CD8-positive, alpha-beta T cell (primary cell): ENCODE measurements at regions of chr9 and their contacts with region 1.

Region 1: GRCh38 chr9:97921959-97922724 is at the start of gene TRMO:
- DNase-seq: peak; percentile 94 to 100 (median 99)
- ATAC-seq: peak; percentile 83
- H3K4me3 ChIP-seq: peak within 1 kb of the TSS; percentile 70 to 89
- H3K4me3 Mint-ChIP-seq: peak within 1 kb of the TSS; percentile 87
- H3K27ac ChIP-seq: peak within 1 kb of the TSS; percentile 97 to 100
- H3K27ac Mint-ChIP-seq: peak within 1 kb of the TSS; percentile 99
- H3K4me1 ChIP-seq: peaks cover 42% of the 10 kb centered on the region
- H3K4me1 Mint-ChIP-seq: peaks cover 52% of the 10 kb centered on the region
- H3K27me3 ChIP-seq: no peaks in the 10 kb centered on the region
- H3K27me3 Mint-ChIP-seq: no peaks in the 10 kb centered on the region
- CTCF ChIP-seq: peak; percentile 77
- total RNA-seq, gene TRMO: 45.7 to 50.6 TPM

Region 2: DNA sequence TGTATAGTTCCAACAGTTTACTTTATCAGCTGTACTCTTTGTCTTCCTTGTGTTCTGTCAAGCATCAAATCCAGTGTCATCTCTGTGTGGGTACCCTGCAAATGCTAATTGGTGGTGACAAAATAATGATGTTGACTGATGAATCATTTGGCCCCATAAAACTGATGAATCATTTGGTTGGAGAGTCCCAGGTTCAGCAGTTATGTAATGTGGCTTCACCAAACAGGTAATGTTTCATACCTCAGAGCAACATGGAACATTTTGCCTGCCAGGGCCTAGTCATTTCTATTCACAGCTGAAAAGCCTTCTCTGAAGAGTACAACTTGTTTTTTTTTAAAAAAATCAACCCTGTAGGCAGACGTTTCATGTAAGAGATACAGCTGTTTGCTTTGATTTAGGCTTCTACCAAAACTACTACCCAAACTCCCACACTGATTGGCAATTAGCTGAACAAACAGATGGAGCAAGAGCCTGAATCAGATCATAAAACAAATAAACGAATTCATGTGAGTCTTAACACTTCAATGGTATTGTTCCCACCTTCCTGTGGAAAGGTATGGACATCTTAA is 859.6 kb before region 1 on chr9:
- CTCF ChIA-PET with region 1: no interaction called
- POLR2A ChIA-PET with region 1: no interaction called
- intact Hi-C with region 1: no loop called
- DNase-seq: no peak
- ATAC-seq: no peak
- H3K4me3 ChIP-seq: no peak overlapping the region
- H3K4me3 Mint-ChIP-seq: no peak overlapping the region
- H3K27ac ChIP-seq: no peak overlapping the region
- H3K27ac Mint-ChIP-seq: no peak overlapping the region
- H3K4me1 ChIP-seq: no peaks in the 10 kb centered on the region
- H3K4me1 Mint-ChIP-seq: no peaks in the 10 kb centered on the region
- H3K27me3 ChIP-seq: no peaks in the 10 kb centered on the region
- H3K27me3 Mint-ChIP-seq: peaks cover 23% of the 10 kb centered on the region
- CTCF ChIP-seq: no peak

Region 3: GRCh38 chr9:97411789-97412625 is 510.1 kb before region 1 on chr9 and contains the start of gene TDRD7:
- CTCF ChIA-PET with region 1: no interaction called
- POLR2A ChIA-PET with region 1: no interaction called
- intact Hi-C with region 1: loop called in 1 of 2 experiments (anchors 5 kb)
- DNase-seq: peak; percentile 86 to 97 (median 92)
- ATAC-seq: peak; percentile 88
- H3K4me3 ChIP-seq: peak within 1 kb of the TSS; percentile 62 to 77
- H3K4me3 Mint-ChIP-seq: peak within 1 kb of the TSS; percentile 86
- H3K27ac ChIP-seq: peak within 1 kb of the TSS; percentile 56 to 79
- H3K27ac Mint-ChIP-seq: peak within 1 kb of the TSS; percentile 85
- H3K4me1 ChIP-seq: peaks cover 13% of the 10 kb centered on the region
- H3K4me1 Mint-ChIP-seq: peaks cover 27% of the 10 kb centered on the region
- H3K27me3 ChIP-seq: no peaks in the 10 kb centered on the region
- H3K27me3 Mint-ChIP-seq: peaks cover 14% of the 10 kb centered on the region
- CTCF ChIP-seq: peak; percentile 96
- total RNA-seq, gene TDRD7: 3.5 to 4.5 TPM

Region 4: GRCh38 chr9:97615439-97616072 is 306.6 kb before region 1 on chr9:
- CTCF ChIA-PET with region 1: no interaction called
- POLR2A ChIA-PET with region 1: no interaction called
- intact Hi-C with region 1: no loop called
- DNase-seq: peak in 8 of 9 experiments; percentile 22 to 74 (median 58)
- ATAC-seq: peak; percentile 67
- H3K4me3 ChIP-seq: no peak overlapping the region
- H3K4me3 Mint-ChIP-seq: no peak overlapping the region
- H3K27ac ChIP-seq: no peak overlapping the region
- H3K27ac Mint-ChIP-seq: no peak overlapping the region
- H3K4me1 ChIP-seq: no peaks in the 10 kb centered on the region
- H3K4me1 Mint-ChIP-seq: peaks cover 2% of the 10 kb centered on the region
- H3K27me3 ChIP-seq: no peaks in the 10 kb centered on the region
- H3K27me3 Mint-ChIP-seq: no peaks in the 10 kb centered on the region
- CTCF ChIP-seq: peak; percentile 97

Region 5: DNA sequence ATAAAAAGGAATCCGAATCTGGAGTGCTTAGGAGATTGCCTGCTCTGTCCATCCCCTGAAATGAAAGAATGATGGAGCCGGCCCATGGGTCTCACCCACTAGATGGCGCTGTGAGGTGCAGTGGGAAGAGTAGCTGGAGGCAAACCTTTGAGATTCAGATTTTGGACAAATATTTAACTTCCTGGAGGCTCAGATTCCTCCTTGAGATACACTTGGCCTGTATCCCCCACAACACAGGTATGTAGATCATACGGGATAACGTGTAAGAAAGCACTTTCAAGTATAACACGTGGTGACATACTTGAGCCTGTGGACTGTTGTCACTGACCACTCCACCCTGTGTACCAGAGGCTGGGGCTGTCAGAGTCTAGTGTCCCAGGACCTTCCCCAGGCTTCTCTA is 32.1 kb before region 1 on chr9:
- CTCF ChIA-PET with region 1: interaction called, 72 read pairs
- POLR2A ChIA-PET with region 1: interaction called, 14 read pairs
- intact Hi-C with region 1: loop called in 1 of 2 experiments (anchors 1 kb)
- DNase-seq: peak; percentile 44 to 77 (median 64)
- ATAC-seq: peak; percentile 77
- H3K4me3 ChIP-seq: no peak overlapping the region
- H3K4me3 Mint-ChIP-seq: no peak overlapping the region
- H3K27ac ChIP-seq: no peak overlapping the region
- H3K27ac Mint-ChIP-seq: peak overlapping the region; percentile 27
- H3K4me1 ChIP-seq: no peaks in the 10 kb centered on the region
- H3K4me1 Mint-ChIP-seq: peaks cover 8% of the 10 kb centered on the region
- H3K27me3 ChIP-seq: no peaks in the 10 kb centered on the region
- H3K27me3 Mint-ChIP-seq: no peaks in the 10 kb centered on the region
- CTCF ChIP-seq: peak; percentile 84

Region 6: GRCh38 chr9:97943308-97943855 is 21.2 kb after region 1 on chr9:
- CTCF ChIA-PET with region 1: interaction called, 32 read pairs
- POLR2A ChIA-PET with region 1: interaction called, 3 read pairs
- intact Hi-C with region 1: loop called in 1 of 2 experiments (anchors 1 kb)
- DNase-seq: no peak
- ATAC-seq: no peak
- H3K4me3 ChIP-seq: no peak overlapping the region
- H3K4me3 Mint-ChIP-seq: no peak overlapping the region
- H3K27ac ChIP-seq: no peak overlapping the region
- H3K27ac Mint-ChIP-seq: no peak overlapping the region
- H3K4me1 ChIP-seq: peaks cover 7% of the 10 kb centered on the region
- H3K4me1 Mint-ChIP-seq: peaks cover 8% of the 10 kb centered on the region
- H3K27me3 ChIP-seq: no peaks in the 10 kb centered on the region
- H3K27me3 Mint-ChIP-seq: no peaks in the 10 kb centered on the region
- CTCF ChIP-seq: no peak

Region 7: DNA sequence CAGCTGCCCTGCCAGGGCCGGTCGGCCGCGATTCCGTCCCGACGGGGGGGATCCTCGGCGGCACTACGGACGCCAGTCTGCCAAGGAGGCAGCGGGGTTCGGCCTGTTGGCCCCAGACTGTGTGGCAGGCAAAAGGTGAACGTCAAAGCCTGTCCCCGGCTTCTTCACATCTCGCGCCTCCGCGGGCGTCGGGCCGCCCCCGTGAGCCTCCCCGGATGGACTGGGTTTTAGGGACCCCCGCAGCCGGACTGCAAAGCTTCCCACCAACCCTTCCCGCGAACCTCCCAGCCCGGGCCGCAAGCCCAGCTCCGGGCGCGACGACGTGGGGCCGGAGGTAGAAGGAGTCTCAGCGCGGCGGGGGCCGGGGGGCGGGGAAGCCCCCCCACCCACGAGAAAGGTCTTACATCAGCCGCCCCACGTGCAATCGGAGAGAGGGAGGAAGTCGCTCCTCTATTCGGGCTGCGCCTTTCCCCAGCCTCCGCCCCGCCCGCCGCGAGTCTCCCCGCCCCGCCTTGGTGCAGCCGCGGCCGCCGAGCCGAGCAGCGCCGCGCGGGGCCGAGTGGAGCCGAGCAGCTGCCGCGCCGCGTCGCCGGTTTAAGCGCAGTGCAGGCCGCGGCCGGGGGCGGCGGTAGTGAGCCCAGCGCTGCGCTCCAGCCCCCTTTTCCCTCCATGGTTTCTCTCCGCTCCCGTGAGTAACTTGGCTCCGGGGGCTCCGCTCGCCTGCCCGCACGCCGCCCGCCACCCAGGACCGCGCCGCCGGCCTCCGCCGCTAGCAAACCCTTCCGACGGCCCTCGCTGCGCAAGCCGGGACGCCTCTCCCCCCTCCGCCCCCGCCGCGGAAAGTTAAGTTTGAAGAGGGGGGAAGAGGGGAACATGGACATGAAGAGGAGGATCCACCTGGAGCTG is 60.8 kb after region 1 on chr9 and contains the start of gene ANP32B:
- CTCF ChIA-PET with region 1: interaction called, 86 read pairs
- POLR2A ChIA-PET with region 1: interaction called, 121 read pairs
- intact Hi-C with region 1: loop called (anchors 1 kb)
- DNase-seq: peak; percentile 87 to 97 (median 94)
- ATAC-seq: peak; percentile 83
- H3K4me3 ChIP-seq: peak within 1 kb of the TSS; percentile 75 to 92
- H3K4me3 Mint-ChIP-seq: peak within 1 kb of the TSS; percentile 92
- H3K27ac ChIP-seq: peak within 1 kb of the TSS; percentile 75 to 85
- H3K27ac Mint-ChIP-seq: peak within 1 kb of the TSS; percentile 93
- H3K4me1 ChIP-seq: peaks cover 53% of the 10 kb centered on the region
- H3K4me1 Mint-ChIP-seq: peaks cover 64% of the 10 kb centered on the region
- H3K27me3 ChIP-seq: no peaks in the 10 kb centered on the region
- H3K27me3 Mint-ChIP-seq: no peaks in the 10 kb centered on the region
- CTCF ChIP-seq: peak; percentile 94
- total RNA-seq, gene ANP32B: 168 to 177 TPM

Region 8: DNA sequence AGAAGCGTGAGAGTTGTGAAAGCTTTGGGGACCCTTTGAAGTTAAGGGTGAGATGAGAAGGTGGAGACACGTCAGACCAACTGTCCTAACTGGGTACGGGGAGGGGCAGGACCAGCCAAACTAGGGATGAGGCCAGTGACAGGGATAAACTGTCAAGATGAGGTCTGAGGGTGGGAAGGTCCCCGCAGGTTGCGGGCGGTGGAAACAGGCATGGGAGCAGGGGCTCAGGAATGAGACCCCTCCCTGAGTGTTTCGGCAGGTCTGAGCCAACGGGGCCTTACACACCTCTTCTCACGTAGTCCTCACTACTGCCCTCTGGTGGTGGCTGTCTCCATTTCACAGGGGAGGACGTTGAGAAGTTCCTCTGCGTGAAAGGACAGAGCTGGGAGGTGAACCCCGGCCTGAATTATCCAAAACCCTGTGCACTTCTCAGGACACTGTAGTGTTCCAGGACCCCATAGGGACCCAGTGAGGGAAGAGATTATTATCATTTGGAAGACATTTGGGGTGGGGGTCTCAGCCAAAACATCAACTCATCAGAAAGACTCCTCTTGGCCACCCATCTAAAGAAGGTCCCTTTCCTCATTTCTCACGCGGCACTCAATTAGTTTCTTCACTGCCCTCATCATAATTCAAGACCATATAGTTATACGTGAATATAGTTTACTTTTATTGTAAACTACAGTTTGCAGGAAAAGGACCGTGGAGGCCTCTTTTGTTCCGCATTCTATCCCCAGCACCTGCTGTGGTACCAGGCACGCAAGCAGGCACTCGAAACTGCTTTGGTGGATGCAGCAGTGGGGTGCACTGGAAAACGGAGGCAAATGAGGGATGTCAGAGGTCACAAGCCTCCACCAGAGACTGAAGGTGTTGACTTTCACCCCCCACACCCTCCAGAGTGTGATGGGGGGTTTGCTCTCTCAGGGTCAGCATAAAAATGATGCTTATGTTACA is 112.7 kb after region 1 on chr9:
- CTCF ChIA-PET with region 1: interaction called, 110 read pairs
- POLR2A ChIA-PET with region 1: interaction called, 4 read pairs
- intact Hi-C with region 1: loop called (anchors 1 kb)
- DNase-seq: peak; percentile 77 to 97 (median 91)
- ATAC-seq: peak; percentile 99
- H3K4me3 ChIP-seq: no peak overlapping the region
- H3K4me3 Mint-ChIP-seq: no peak overlapping the region
- H3K27ac ChIP-seq: no peak overlapping the region
- H3K27ac Mint-ChIP-seq: no peak overlapping the region
- H3K4me1 ChIP-seq: no peaks in the 10 kb centered on the region
- H3K4me1 Mint-ChIP-seq: peaks cover 6% of the 10 kb centered on the region
- H3K27me3 ChIP-seq: no peaks in the 10 kb centered on the region
- H3K27me3 Mint-ChIP-seq: no peaks in the 10 kb centered on the region
- CTCF ChIP-seq: peak; percentile 80

Region 9: DNA sequence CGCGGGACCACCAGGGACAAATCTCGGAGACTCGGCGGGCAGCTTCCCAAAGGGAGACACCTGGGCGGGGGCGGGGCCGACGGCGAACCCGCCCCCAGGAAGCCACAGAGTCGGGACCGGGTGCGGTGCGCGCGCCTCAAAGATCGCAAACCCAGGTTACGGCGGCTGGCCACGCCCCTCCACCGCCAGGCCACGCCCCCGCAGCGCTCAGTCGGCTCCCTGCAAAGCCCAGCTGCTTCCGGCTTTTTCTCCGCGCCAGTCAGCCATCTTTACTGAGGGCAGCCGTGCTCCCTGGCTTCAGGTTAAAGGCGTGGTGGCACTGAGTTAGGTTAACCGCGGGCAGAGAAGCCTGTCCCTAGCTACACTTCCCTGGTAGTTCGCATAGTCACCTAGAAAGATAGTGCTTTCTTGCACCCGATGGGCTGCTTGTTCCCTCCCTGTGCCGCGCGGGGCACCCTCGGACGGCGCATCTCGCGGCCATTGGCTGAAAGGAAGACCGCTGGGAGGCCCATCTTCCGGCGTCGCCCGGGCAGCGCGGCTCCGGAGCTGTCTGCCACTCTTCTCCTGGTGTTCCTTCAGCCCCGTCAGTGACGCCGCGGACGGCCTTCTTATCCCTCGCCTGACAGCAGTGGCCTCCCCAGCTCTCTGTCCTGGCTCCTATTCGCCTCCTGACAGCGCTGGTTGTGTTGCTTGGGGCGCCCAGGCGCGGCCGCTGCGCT is 333.6 kb after region 1 on chr9 and contains the start of gene TBC1D2:
- CTCF ChIA-PET with region 1: interaction called, 14 read pairs
- POLR2A ChIA-PET with region 1: interaction called, 26 read pairs
- intact Hi-C with region 1: loop called (anchors 1 kb)
- DNase-seq: peak; percentile 96 to 99 (median 97)
- ATAC-seq: peak; percentile 92
- H3K4me3 ChIP-seq: peak within 1 kb of the TSS; percentile 90 to 94
- H3K4me3 Mint-ChIP-seq: peak within 1 kb of the TSS; percentile 93
- H3K27ac ChIP-seq: peak within 1 kb of the TSS; percentile 82 to 88
- H3K27ac Mint-ChIP-seq: peak within 1 kb of the TSS; percentile 94
- H3K4me1 ChIP-seq: peaks cover 20% of the 10 kb centered on the region
- H3K4me1 Mint-ChIP-seq: peaks cover 33% of the 10 kb centered on the region
- H3K27me3 ChIP-seq: no peaks in the 10 kb centered on the region
- H3K27me3 Mint-ChIP-seq: no peaks in the 10 kb centered on the region
- CTCF ChIP-seq: peak; percentile 13
- total RNA-seq, gene TBC1D2: 1.9 to 2.6 TPM